GM10248 (cell line): ENCODE measurements at regions of chr6 and their contacts with region 1.

Region 1: GRCh38 chr6:63802606-63803206 is 167.1 kb downstream of the PHF3 start:
- DNase-seq: peak; percentile 23
- CTCF ChIP-seq: peak; percentile 61

Region 2: GRCh38 chr6:63307581-63308246 is 495.0 kb before region 1 on chr6:
- CTCF ChIA-PET with region 1: interaction called, 12 read pairs
- POLR2A ChIA-PET with region 1: no interaction called
- DNase-seq: peak; percentile 36
- CTCF ChIP-seq: peak; percentile 51

Region 3: DNA sequence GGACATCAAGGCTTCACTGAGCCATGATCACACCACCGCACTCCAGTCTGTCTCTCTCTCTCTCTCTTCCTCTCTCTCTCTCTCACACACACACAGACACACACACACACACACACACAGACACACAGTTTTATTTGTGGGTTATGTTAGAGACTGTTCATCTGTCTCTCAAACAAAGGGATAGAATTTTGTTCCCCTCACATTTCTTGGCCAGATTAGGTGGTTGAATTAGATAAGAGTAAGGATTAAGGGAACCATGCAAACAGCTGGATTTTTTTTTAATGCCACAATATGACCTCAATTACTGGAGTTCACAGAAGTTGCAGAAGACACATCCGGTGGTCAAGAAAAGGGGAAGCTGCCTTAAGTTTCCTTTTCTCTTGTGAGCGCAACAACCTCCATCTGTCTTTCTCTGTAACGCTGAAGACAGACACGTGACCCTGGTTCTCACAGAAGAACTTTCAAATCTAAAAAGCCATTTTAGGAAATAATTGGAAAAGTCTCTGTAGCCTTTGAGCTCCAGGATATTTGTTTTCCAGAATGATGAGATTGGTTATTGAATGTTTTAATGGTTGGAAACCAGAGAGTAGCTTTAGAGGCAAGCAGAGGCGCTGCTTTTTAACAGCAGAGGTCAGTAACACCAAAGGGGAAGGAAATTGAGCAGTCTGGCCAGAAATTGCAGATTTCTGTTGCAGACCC is 450.0 kb before region 1 on chr6:
- CTCF ChIA-PET with region 1: interaction called, 58 read pairs
- POLR2A ChIA-PET with region 1: no interaction called
- DNase-seq: peak; percentile 62
- CTCF ChIP-seq: peak; percentile 76

Region 4: DNA sequence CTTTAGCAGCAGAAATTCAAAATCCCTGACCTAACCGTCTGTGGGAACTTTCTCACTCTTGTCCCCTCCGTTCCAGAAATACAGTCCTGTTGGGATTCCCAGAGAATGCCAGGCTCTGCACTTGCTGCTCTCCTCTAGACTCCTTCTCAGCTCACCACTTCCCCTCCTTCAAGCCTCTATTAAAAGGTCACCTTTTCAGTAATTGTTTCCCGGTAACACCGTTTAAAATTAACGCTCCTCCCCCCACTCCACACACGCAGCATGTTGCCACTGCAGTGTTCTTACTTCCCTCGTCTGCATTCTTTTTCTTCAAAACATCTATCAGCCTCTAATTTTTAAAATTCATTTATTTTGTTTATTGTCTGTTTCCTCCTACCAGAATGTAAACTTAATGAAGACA is 434.4 kb before region 1 on chr6:
- CTCF ChIA-PET with region 1: no interaction called
- POLR2A ChIA-PET with region 1: no interaction called
- DNase-seq: no peak
- CTCF ChIP-seq: no peak

Region 5: GRCh38 chr6:63790334-63790733 is 12.4 kb before region 1 on chr6:
- CTCF ChIA-PET with region 1: interaction called, 11 read pairs
- POLR2A ChIA-PET with region 1: no interaction called
- DNase-seq: peak; percentile 27
- CTCF ChIP-seq: no peak

Region 6: DNA sequence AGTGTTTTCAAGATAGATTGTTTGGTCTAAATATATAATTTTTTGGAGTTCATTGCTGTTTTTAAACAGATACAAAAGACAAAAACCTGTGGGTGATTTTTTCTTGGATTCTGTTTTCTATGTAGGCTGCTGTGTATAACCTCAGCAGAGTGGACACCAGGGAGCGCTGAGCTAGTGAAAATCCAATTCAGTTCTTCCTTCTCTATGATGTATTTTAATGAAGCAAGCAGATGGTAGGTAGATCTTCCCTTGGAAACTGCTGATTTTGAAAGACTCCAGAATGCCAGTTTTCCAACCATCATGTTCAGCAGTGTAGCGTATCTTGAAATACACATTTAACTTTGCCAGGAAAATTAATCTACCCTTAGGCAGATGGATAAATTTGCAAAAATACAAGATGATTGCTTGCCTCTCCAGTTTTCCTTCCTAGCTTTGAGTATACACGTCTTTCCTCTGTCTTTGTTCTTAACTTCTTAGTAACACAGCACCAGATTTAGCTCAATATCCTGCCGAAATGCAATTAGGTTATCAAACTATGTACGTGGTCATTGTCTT is 10.9 kb after region 1 on chr6:
- CTCF ChIA-PET with region 1: interaction called, 20 read pairs
- POLR2A ChIA-PET with region 1: no interaction called
- DNase-seq: no peak
- CTCF ChIP-seq: no peak